A549 (cell line): ENCODE measurements at regions of chr17 and their contacts with region 1.

Region 1: GRCh38 chr17:75784473-75785015 is at the start of gene UNK:
- DNase-seq: peak; percentile 100
- ATAC-seq: peak; percentile 86 to 89
- H3K4me3 ChIP-seq: peak within 1 kb of the TSS; percentile 60
- H3K27ac ChIP-seq: peak within 1 kb of the TSS; percentile 96 to 97
- H3K4me1 ChIP-seq: peaks cover 39% of the 10 kb centered on the region
- CTCF ChIP-seq: no peak
- EP300 ChIP-seq: no peak
- POLR2A ChIP-seq: no peak
- RAD21 ChIP-seq: no peak
- polyA plus RNA-seq, gene UNK: 34.5 and 40.0 TPM in 2 replicates

Region 2: DNA sequence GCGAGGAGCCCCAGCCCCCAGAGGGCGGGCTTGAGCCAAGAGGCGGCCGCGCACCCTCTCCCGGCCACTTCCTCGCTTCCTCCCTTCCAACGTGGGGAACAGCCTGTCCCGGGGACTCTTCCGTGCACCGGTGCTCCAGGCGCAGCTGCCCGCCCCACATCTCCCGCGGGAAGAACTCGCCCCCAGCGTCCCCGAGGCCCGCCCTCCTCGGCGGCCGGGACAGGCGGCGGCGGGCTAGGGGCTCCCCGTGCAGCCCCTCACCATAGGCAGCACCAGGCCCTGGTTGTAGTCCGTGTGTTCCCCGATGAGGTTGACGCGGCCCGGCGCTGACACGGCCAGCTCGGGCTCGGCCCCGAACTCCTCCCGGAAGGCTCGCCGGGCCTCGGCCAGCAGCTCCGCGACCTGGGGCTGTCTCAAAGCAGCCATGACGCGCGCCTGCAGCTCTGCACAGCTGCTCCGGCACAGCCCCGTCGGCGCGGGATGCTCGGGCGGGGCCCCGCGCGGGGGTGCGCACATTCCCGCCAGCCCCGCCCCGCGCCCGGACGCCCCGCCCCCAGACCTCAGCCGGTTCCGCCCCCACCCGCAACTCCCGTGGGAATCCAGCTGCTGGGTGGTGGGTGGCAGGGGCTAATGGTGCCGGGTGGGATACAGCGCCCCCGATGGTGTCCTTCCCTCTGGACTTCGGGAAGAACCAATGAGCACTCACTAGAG is 19.7 kb before region 1 on chr17 and contains the start of gene GALK1:
- CTCF ChIA-PET with region 1: interaction called, 131 read pairs
- POLR2A ChIA-PET with region 1: interaction called, 73 read pairs
- DNase-seq: peak; percentile 78 to 81
- ATAC-seq: peak; percentile 89 to 91
- H3K4me3 ChIP-seq: peak within 1 kb of the TSS; percentile 68
- H3K27ac ChIP-seq: peak within 1 kb of the TSS; percentile 83 to 92
- H3K4me1 ChIP-seq: peaks cover 13% of the 10 kb centered on the region
- CTCF ChIP-seq: peak; percentile 65
- EP300 ChIP-seq: no peak
- POLR2A ChIP-seq: peak; percentile 71
- RAD21 ChIP-seq: peak; percentile 59 to 66
- polyA plus RNA-seq, gene GALK1: 20.7 and 21.3 TPM in 2 replicates

Region 3: DNA sequence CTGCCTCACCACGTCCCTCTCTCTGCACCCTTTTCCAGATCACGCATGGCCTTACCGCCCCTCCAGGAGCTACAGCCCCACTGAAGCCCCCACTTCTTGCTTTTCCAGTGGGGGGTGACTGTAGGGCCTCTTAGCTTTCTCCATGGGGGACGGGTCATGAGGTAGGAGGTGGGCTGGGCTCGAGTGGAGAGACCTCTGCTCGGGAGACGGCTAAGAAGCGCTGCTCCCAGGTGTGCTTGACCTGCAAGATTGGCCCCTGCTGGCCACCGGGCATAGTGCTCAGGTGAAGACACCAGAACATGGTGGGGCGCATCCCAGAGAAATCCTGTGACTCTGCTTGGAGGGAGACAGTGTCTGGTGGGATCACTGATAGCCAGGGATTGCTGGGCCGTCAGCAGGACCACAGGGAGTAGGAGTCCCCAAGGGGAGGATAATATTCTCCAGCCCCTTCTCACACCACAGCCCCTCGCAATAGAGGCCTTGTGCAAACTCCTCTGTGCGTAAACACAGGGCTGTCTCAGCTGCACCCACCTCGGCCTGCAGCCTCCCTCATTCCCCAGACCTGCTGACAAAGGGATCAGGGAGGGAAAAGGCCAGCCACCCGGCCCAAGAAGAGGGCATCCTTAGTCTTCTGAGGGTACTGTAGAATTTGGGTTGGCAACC is 10.6 kb before region 1 on chr17:
- CTCF ChIA-PET with region 1: interaction called, 20 read pairs
- POLR2A ChIA-PET with region 1: interaction called, 24 read pairs
- DNase-seq: no peak
- ATAC-seq: peak; percentile 27 to 47
- H3K4me3 ChIP-seq: no peak overlapping the region
- H3K27ac ChIP-seq: no peak overlapping the region
- H3K4me1 ChIP-seq: peaks cover 13% of the 10 kb centered on the region
- CTCF ChIP-seq: no peak
- EP300 ChIP-seq: no peak
- POLR2A ChIP-seq: no peak
- RAD21 ChIP-seq: no peak

Region 4: DNA sequence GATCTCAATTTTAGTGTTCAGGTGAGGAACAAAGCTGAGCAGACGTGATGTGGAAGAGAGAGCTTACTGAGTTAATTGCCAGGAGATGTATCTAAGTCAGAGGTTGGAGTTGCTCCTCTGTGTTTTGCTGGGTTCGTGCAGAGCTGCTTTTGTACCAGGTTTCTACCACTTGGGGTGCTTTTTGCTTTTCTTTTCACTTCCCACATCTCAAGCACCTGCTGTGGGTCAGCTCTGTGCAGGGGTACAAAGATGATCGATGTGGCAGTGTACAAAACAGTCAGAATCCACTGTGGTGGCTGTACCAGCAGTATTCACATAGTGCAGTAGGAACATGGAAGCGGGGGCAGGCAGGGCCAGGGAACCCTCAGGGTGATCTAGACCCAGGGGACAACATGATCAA is 14.9 kb after region 1 on chr17:
- CTCF ChIA-PET with region 1: interaction called, 72 read pairs
- POLR2A ChIA-PET with region 1: interaction called, 17 read pairs
- DNase-seq: no peak
- ATAC-seq: peak; percentile 24 to 37; a peak in 4 of 6 replicates
- H3K4me3 ChIP-seq: no peak overlapping the region
- H3K27ac ChIP-seq: no peak overlapping the region
- H3K4me1 ChIP-seq: no peaks in the 10 kb centered on the region
- CTCF ChIP-seq: no peak
- EP300 ChIP-seq: no peak
- POLR2A ChIP-seq: no peak
- RAD21 ChIP-seq: no peak

Region 5: GRCh38 chr17:75855310-75856081 is 71.0 kb after region 1 on chr17 and contains the start of gene WBP2:
- CTCF ChIA-PET with region 1: interaction called, 5 read pairs
- POLR2A ChIA-PET with region 1: interaction called, 68 read pairs
- DNase-seq: peak; percentile 100
- ATAC-seq: peak; percentile 90 to 95
- H3K4me3 ChIP-seq: peak within 1 kb of the TSS; percentile 58
- H3K27ac ChIP-seq: peak within 1 kb of the TSS; percentile 83 to 91
- H3K4me1 ChIP-seq: peaks cover 19% of the 10 kb centered on the region
- CTCF ChIP-seq: peak; percentile 63
- EP300 ChIP-seq: no peak
- POLR2A ChIP-seq: peak; percentile 95
- RAD21 ChIP-seq: peak in 1 of 2 experiments; percentile 65; a peak in 4 of 5 replicates
- polyA plus RNA-seq, gene WBP2: 35.6 and 39.7 TPM in 2 replicates

Region 6: DNA sequence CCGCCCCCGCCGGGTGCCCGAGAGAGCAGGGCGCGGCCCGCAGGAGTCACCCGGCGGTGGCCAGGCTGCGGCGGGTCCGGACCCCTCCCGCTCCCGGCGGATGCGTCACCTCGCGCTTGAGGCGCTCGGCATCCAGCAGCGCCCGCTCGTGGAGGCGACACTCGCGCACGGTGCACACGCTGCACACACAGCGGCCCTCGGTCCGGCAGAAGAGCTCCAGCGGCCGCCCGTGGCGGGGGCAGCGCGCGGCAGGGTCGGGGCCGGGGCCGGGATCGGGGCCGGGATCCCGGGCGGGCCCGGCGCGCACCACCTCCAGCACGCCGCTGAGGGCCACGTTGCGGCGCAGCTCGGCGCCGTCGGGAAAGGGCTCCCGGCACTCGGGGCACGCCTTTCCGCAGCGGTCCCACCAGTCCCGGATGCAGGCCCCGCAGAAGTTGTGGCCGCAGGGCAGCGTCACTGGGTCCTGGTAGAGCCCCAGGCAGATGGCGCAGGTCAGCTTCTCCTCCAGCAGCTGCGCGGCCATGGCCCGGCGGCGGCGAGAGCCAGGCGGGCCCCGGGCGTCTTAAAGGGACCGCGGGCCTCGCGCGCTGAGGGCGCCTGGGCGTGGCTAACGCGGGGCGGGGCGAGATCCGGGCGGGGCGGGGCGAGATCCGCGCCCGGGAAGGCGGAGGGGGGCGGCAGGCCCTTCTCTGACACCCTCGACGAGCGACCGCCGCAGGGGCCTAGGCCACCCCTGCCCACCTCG is 112.0 kb after region 1 on chr17 and contains the start of gene TRIM65:
- CTCF ChIA-PET with region 1: interaction called, 10 read pairs
- POLR2A ChIA-PET with region 1: interaction called, 10 read pairs
- DNase-seq: peak; percentile 69 to 83
- ATAC-seq: peak; percentile 76 to 80
- H3K4me3 ChIP-seq: peak within 1 kb of the TSS; percentile 84
- H3K27ac ChIP-seq: peak within 1 kb of the TSS; percentile 90 to 97
- H3K4me1 ChIP-seq: peaks cover 17% of the 10 kb centered on the region
- CTCF ChIP-seq: peak; percentile 59
- EP300 ChIP-seq: no peak
- POLR2A ChIP-seq: peak; percentile 95
- RAD21 ChIP-seq: peak; percentile 12 to 54; a peak in 3 of 5 replicates
- polyA plus RNA-seq, gene TRIM65: 13.5 and 17.4 TPM in 2 replicates